Caco-2 (cell line): ENCODE measurements at regions of chr2 and their contacts with region 1.

Region 1: DNA sequence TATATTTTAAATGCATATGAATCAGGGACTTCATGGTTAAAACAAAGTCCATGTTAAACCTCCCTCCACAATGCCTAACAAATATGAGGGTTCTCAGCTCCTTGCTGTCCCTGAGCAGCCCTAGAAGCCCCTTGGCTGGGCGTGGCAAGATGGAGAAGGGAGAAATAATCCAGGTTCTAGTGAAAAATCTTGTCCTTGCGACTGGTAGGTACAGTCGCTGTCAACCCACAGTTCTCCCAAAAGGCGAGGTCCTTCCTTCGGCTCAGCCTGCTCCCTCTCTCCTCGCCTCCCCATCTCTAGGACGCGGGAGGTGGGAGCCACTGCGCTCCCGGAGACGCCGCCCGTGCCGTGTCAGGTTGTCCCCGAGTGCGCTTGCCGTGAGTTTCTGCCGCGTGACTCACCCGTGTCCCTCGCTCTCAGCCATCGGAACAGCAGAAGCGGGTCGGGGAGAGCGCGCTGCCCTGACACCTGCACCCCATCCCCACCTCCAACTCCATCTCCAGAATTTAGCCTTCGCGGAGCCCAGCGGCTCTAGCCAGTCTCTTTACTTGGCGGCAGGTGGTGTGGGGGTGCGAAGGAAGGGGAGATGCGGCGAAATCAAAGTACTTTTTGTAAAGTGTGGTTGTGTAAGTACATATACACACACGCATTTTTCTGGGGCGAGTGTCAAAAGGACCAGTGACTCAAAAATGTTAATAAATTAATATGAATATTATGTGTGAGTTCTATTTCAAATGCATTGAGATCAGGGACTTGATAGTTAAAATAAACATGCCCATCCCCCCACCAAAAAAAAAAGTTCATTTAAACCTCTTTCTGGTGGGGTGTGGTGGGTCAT is 65.1 kb upstream of the TMEM17 start:
- DNase-seq: peak; percentile 74 to 80
- H3K4me3 ChIP-seq: peak overlapping the region; percentile 48
- H3K4me3 Mint-ChIP-seq: peak overlapping the region; percentile 90
- H3K27ac Mint-ChIP-seq: peak overlapping the region; percentile 48
- H3K4me1 ChIP-seq: peaks cover 84% of the 10 kb centered on the region
- H3K4me1 Mint-ChIP-seq: peaks cover 63% of the 10 kb centered on the region
- H3K27me3 ChIP-seq: no peaks in the 10 kb centered on the region
- H3K27me3 Mint-ChIP-seq: no peaks in the 10 kb centered on the region
- CTCF ChIP-seq: no peak

Region 2: GRCh38 chr2:62456721-62457539 is 114.2 kb before region 1 on chr2:
- CTCF ChIA-PET with region 1: interaction called, 3 read pairs
- POLR2A ChIA-PET with region 1: interaction called, 3 read pairs
- intact Hi-C with region 1: loop called (anchors 1 kb)
- DNase-seq: peak; percentile 82 to 95
- H3K4me3 ChIP-seq: peak overlapping the region; percentile 68
- H3K4me3 Mint-ChIP-seq: peak overlapping the region; percentile 75
- H3K27ac Mint-ChIP-seq: peak overlapping the region; percentile 66
- H3K4me1 ChIP-seq: peaks cover 38% of the 10 kb centered on the region
- H3K4me1 Mint-ChIP-seq: peaks cover 8% of the 10 kb centered on the region
- H3K27me3 ChIP-seq: no peaks in the 10 kb centered on the region
- H3K27me3 Mint-ChIP-seq: no peaks in the 10 kb centered on the region
- CTCF ChIP-seq: peak; percentile 92 to 98

Region 3: DNA sequence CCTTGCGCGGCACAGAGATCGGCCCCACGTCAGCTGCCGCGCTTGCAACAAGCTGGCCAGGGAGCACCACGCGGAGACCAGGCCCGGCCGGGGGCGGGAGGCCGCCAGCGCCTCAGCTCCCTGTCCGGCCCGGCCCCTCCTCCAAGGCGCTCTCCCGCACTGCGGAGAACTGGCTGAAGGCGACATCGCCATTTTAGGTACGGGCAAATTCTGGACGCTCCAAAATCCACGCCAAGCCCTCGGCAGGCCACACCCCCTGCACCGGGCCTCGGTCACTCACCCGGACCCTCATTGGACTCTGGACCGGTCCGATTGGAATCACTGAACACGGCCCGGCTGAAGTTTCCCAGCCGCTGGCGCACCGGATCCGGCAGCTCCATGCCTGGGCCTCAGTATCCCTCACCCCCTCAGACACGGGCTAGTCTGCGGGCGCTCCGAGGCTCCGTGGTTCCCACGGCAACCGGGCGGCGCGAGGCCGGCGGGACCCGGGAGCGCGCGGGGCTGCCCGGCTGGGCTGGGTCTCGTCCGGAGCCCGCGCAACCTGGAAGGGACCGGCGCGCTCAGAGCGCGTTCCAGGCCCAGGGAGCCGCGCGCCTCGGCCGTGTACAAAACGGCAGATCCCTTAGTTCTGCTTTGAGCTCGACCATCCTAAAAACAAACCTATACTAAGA is 65.2 kb before region 1 on chr2 and contains the start of gene TMEM17:
- CTCF ChIA-PET with region 1: no interaction called
- POLR2A ChIA-PET with region 1: interaction called, 17 read pairs
- intact Hi-C with region 1: loop called (anchors 1 kb)
- DNase-seq: peak; percentile 95 to 98
- H3K4me3 ChIP-seq: peak within 1 kb of the TSS; percentile 51
- H3K4me3 Mint-ChIP-seq: peak within 1 kb of the TSS; percentile 83
- H3K27ac Mint-ChIP-seq: peak within 1 kb of the TSS; percentile 87
- H3K4me1 ChIP-seq: no peaks in the 10 kb centered on the region
- H3K4me1 Mint-ChIP-seq: peaks cover 15% of the 10 kb centered on the region
- H3K27me3 ChIP-seq: no peaks in the 10 kb centered on the region
- H3K27me3 Mint-ChIP-seq: no peaks in the 10 kb centered on the region
- CTCF ChIP-seq: no peak
- total RNA-seq, gene TMEM17: 2.6 and 3.3 TPM in 2 replicates

Region 4: DNA sequence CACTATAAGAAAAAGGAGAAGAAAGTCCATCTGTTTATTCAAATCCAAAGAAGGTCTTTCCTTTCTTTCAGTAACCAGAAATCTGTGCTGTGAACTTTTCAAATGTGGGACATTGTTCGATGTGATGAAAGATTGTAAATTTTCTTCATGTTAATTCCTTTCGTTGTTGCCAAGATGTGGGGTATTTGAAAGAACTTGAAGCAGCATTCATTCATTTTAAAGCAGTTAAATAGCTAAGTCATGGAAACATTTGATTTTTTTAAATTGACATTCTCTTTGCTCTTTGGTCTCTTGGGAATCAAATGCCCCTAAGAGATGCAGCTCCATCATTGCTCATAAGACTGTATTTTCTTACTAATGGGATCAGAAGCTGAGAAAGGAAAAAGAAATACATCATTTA is 40.8 kb after region 1 on chr2:
- CTCF ChIA-PET with region 1: no interaction called
- POLR2A ChIA-PET with region 1: no interaction called
- intact Hi-C with region 1: loop called (anchors 5 kb)
- DNase-seq: no peak
- H3K4me3 ChIP-seq: no peak overlapping the region
- H3K4me3 Mint-ChIP-seq: no peak overlapping the region
- H3K27ac Mint-ChIP-seq: no peak overlapping the region
- H3K4me1 ChIP-seq: no peaks in the 10 kb centered on the region
- H3K4me1 Mint-ChIP-seq: no peaks in the 10 kb centered on the region
- H3K27me3 ChIP-seq: no peaks in the 10 kb centered on the region
- H3K27me3 Mint-ChIP-seq: no peaks in the 10 kb centered on the region
- CTCF ChIP-seq: no peak

Region 5: GRCh38 chr2:62672601-62673000 is 101.5 kb after region 1 on chr2:
- CTCF ChIA-PET with region 1: interaction called, 5 read pairs
- POLR2A ChIA-PET with region 1: no interaction called
- intact Hi-C with region 1: loop called (anchors 1 kb)
- DNase-seq: peak; percentile 90 to 97
- H3K4me3 ChIP-seq: no peak overlapping the region
- H3K4me3 Mint-ChIP-seq: peak overlapping the region; percentile 48
- H3K27ac Mint-ChIP-seq: no peak overlapping the region
- H3K4me1 ChIP-seq: peaks cover 55% of the 10 kb centered on the region
- H3K4me1 Mint-ChIP-seq: peaks cover 23% of the 10 kb centered on the region
- H3K27me3 ChIP-seq: no peaks in the 10 kb centered on the region
- H3K27me3 Mint-ChIP-seq: no peaks in the 10 kb centered on the region
- CTCF ChIP-seq: peak in 1 of 2 experiments; percentile 15

Region 6: GRCh38 chr2:62774555-62775366 is 203.7 kb after region 1 on chr2:
- CTCF ChIA-PET with region 1: interaction called, 3 read pairs
- POLR2A ChIA-PET with region 1: no interaction called
- intact Hi-C with region 1: loop called (anchors 2 kb)
- DNase-seq: peak in 1 of 2 experiments; percentile 60
- H3K4me3 ChIP-seq: no peak overlapping the region
- H3K4me3 Mint-ChIP-seq: no peak overlapping the region
- H3K27ac Mint-ChIP-seq: peak overlapping the region; percentile 69
- H3K4me1 ChIP-seq: 0 out of 2 replicates have a peak, but pooled peaks cover 5% of the 10 kb centered on the region
- H3K4me1 Mint-ChIP-seq: peaks cover 29% of the 10 kb centered on the region
- H3K27me3 ChIP-seq: no peaks in the 10 kb centered on the region
- H3K27me3 Mint-ChIP-seq: no peaks in the 10 kb centered on the region
- CTCF ChIP-seq: peak; percentile 72 to 86